Breast epithelium (tissue), 4 donors: ENCODE measurements at regions of chr9 and their contacts with region 1.

Region 1: DNA sequence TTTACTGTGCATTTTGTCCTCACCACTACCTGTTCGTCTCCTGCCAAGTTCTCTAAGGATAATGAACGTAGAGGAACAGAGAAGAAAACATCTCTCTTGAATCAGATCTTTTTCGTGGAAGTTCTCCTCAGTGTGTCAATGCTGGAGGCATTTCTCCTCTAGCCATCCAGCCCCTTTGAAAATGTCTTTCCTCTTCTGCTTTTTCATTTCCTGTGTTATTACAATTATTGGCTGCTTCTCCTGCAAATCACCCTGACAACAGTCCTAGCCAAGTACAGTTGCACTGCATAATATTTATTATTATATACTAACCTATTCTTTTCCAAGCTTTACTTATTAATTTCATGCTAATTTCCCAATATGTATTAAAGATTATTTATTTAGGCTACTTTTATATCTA is 61.8 kb upstream of the TRPM3 start:
- DNase-seq: no peak
- H3K4me3 ChIP-seq: no peak overlapping the region
- H3K27ac ChIP-seq: no peak overlapping the region
- H3K4me1 ChIP-seq: no peaks in the 10 kb centered on the region
- H3K27me3 ChIP-seq: no peaks in the 10 kb centered on the region
- CTCF ChIP-seq: no peak
- POLR2A ChIP-seq: no peak

Region 2: DNA sequence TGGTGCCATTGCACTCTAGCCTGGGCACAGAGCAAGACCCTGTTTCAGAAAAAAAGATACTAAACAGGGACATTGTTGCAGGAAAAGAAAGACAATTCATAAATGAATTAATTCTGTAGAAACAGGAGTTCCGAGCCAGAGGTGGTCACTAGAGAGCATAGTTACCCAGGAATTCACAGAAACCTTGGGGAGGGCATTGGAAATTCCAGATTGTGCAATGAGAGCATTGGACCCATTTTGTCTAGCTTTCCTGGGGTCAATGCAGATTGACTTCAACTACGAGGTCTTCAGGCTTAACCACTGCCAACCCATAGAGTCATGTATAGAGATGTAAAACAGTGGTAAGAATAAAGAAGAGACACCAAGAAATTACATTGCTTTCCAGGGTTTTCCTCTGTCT is 664.6 kb after region 1 on chr9:
- intact Hi-C with region 1: loop called (anchors 5 kb)
- DNase-seq: no peak
- H3K4me3 ChIP-seq: no peak overlapping the region
- H3K27ac ChIP-seq: no peak overlapping the region
- H3K4me1 ChIP-seq: no peaks in the 10 kb centered on the region
- H3K27me3 ChIP-seq: no peaks in the 10 kb centered on the region
- CTCF ChIP-seq: no peak
- POLR2A ChIP-seq: no peak